OCI-LY7 (cell line): ENCODE measurements at regions of chr5 and their contacts with region 1.

Region 1: DNA sequence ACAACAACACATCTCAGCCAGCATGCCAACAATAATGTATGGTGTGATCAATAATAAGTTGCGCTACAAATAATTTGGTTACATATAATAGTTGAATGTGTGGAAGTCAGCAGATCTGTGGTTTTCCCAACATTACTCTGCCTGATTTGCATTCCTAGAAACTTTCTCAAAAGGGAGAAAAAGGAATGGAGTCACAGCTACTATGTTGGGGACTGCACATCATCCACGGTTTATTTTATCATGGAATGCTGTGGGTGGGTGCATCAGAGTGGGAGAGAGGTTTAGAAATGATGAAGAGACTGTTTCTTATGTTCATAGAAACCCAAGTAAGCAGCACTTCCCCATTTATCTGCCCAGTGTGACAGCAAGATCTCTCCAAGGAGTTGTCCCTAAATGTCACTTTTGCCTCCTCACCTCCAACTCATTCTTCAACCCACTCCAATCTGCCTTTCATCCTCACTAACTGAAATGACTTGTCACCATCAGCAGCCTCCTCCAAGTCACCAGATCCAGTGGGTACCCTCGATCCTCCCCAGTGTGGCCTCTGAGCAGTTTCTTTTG is 2.8 kb upstream of the SPOCK1 start:
- DNase-seq: no peak
- H3K4me3 ChIP-seq: no peak overlapping the region
- H3K27ac ChIP-seq: no peak overlapping the region
- H3K4me1 ChIP-seq: no peaks in the 10 kb centered on the region
- CTCF ChIP-seq: no peak

Region 2: GRCh38 chr5:137310051-137310730 is 191.7 kb before region 1 on chr5:
- CTCF ChIA-PET with region 1: no interaction called
- POLR2A ChIA-PET with region 1: no interaction called
- intact Hi-C with region 1: loop called (anchors 10 kb)
- DNase-seq: no peak
- H3K4me3 ChIP-seq: no peak overlapping the region
- H3K27ac ChIP-seq: no peak overlapping the region
- H3K4me1 ChIP-seq: no peaks in the 10 kb centered on the region
- CTCF ChIP-seq: no peak

Region 3: DNA sequence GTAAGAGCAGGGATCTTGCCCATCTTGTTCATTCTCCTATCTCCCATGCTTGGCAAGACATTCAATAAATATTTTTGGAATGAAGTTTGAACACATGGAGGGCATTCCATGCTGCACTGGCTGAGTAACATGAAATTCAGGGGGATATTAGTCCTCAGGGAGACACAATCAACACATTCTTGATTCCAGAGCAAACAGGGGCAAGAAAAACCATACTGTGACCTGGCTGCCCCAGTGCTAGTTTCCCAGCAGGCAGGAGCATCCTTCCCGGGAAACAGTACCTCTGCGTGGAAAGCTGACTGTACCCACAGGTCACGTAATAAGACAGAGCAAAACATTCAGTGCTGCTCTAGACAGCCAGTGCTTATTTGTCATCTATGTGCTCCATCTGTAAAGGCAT is 63.5 kb after region 1 on chr5:
- CTCF ChIA-PET with region 1: no interaction called
- POLR2A ChIA-PET with region 1: no interaction called
- intact Hi-C with region 1: no loop called
- DNase-seq: no peak
- H3K4me3 ChIP-seq: no peak overlapping the region
- H3K27ac ChIP-seq: no peak overlapping the region
- H3K4me1 ChIP-seq: no peaks in the 10 kb centered on the region
- CTCF ChIP-seq: no peak

Region 4: DNA sequence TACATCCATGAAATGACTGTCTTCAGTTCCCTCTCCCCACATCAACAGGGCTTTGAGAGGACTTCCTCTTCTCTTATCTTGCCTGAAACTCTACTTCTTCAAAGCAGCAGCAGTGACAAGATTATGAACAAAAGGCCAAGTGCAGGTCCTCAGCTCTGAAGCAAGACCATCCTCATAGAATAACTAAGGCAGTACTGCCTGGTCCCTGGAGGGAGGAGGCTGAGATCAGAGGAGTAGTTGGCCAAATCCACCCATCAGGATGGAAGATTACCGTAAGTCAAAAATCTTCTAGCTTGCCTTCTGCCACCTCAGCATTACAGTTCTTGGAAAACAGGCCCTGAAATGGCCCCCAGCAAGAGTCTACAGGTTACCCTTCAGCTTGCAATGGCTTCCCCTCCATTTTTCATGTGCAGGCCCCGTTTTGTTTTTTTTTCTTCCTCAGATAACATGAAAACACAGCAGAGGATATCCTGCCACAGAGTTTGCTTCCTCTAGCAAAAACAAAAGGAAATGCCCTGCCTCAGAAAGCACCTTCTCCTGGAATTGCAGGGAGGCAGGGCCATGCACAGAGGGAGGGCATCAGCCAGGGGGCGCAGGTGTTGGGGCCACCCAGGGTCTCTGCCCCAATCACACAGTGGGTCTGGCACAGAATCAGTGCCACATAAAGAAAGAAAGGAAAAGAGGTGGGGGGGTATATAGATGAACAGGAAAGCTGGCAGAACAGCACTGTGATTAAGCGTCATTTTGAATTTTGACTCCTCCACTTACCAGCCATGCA is 193.9 kb after region 1 on chr5:
- CTCF ChIA-PET with region 1: no interaction called
- POLR2A ChIA-PET with region 1: no interaction called
- intact Hi-C with region 1: no loop called
- DNase-seq: no peak
- H3K4me3 ChIP-seq: no peak overlapping the region
- H3K27ac ChIP-seq: no peak overlapping the region
- H3K4me1 ChIP-seq: no peaks in the 10 kb centered on the region
- CTCF ChIP-seq: peak; percentile 34; the same call in 1 of the 2 replicates

Region 5: GRCh38 chr5:137800700-137801411 is 298.9 kb after region 1 on chr5:
- CTCF ChIA-PET with region 1: no interaction called
- POLR2A ChIA-PET with region 1: no interaction called
- intact Hi-C with region 1: no loop called
- DNase-seq: no peak
- H3K4me3 ChIP-seq: no peak overlapping the region
- H3K27ac ChIP-seq: no peak overlapping the region
- H3K4me1 ChIP-seq: no peaks in the 10 kb centered on the region
- CTCF ChIP-seq: no peak

Region 6: DNA sequence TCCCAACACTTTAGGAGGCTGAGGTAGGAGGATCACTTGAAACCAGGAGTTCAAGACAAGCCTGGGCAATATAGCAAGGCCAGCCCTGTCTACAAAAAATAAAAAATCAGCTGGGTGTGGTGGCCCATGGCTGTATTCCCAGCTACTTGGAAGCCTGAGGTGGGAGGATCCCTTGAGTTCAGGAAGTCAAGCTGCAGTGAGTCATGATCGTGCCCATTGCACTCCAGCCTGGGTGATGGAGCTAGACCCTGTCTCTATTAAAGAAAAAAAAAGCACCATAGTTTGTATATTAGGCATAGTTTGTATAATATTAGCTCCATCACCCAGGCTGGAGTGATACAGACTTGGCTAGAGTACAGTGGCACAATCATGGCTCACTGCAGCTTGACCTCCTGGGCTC is 646.9 kb after region 1 on chr5:
- CTCF ChIA-PET with region 1: no interaction called
- POLR2A ChIA-PET with region 1: no interaction called
- intact Hi-C with region 1: no loop called
- DNase-seq: no peak
- H3K4me3 ChIP-seq: no peak overlapping the region
- H3K27ac ChIP-seq: no peak overlapping the region
- H3K4me1 ChIP-seq: no peaks in the 10 kb centered on the region
- CTCF ChIP-seq: no peak